Activated CD4-positive, alpha-beta memory T cell treated with anti-CD3 and anti-CD28 coated beads, Interleukin-2, amount 10 ng/mL, durations not matched to agents 7 days and 5 days (primary cell): ENCODE measurements at regions of chr7 and their contacts with region 1.

Region 1: GRCh38 chr7:142412551-142413193 is 154.8 kb upstream of the PRSS58 start:
- DNase-seq: peak; percentile 45
- H3K4me3 Mint-ChIP-seq: no peak overlapping the region
- H3K27ac Mint-ChIP-seq: no peak overlapping the region
- H3K4me1 Mint-ChIP-seq: peaks cover 3% of the 10 kb centered on the region
- H3K27me3 Mint-ChIP-seq: peaks cover 3% of the 10 kb centered on the region

Region 2: GRCh38 chr7:142438235-142438922 is 25.7 kb after region 1 on chr7:
- CTCF ChIA-PET with region 1: interaction called, 14 read pairs
- POLR2A ChIA-PET with region 1: no interaction called
- DNase-seq: peak; percentile 43
- H3K4me3 Mint-ChIP-seq: no peak overlapping the region
- H3K27ac Mint-ChIP-seq: no peak overlapping the region
- H3K4me1 Mint-ChIP-seq: peaks cover 66% of the 10 kb centered on the region
- H3K27me3 Mint-ChIP-seq: no peaks in the 10 kb centered on the region